Left lung (tissue), 14 donors: ENCODE measurements at regions of chr4 and their contacts with region 1.

Region 1: DNA sequence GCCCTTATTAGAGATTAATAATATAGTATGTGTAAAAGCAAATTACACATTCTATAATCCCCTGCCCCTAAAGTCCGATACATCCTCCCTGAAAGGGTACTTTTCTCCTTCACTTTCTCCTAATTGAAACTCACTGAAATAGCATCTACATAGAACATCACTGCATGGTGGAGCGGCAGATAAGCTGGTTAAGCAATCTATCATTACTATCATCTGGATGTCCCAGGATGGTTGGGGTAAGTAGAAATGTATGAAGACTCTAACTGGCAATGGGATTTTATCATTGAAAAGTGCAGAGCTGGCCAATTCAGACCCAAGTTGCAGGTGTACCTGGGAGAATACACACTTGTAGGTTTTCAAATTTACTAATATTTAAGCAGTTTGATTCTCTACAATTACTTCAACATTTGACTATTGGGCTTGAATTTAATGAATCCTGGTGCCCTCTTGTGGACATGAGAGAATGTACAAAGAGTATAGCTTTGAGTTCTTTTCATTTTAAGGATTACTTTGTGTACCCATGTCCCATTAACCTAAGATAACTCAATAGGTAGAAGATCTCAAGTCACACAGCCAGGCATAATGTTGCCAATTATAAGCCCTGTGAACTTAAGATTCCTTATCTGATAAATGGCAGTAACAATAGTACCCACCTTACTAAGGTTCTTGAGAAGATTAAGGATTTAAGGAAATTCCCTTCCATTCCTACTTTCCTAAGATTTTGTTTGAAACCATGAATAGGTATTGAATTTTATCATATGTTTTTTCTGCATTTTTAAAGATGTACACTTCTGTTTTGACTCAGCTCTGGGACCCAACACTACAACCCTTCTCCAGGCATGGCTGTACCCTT is 69.8 kb downstream of the SHROOM3 start:
- DNase-seq: peak in 1 of 4 donors; percentile 54
- ATAC-seq: peak; percentile 72
- H3K4me3 ChIP-seq: no peak overlapping the region
- H3K27ac ChIP-seq: no peak overlapping the region
- H3K4me1 ChIP-seq: no peaks in the 10 kb centered on the region
- H3K27me3 ChIP-seq: no peaks in the 10 kb centered on the region
- CTCF ChIP-seq: peak; percentile 44 to 65

Region 2: GRCh38 chr4:76188557-76188956 is 316.3 kb before region 1 on chr4:
- intact Hi-C with region 1: no loop called
- DNase-seq: no peak
- ATAC-seq: no peak
- H3K4me3 ChIP-seq: no peak overlapping the region
- H3K27ac ChIP-seq: no peak overlapping the region
- H3K4me1 ChIP-seq: peaks cover 4 to 33% of the 10 kb centered on the region in 2 donors
- H3K27me3 ChIP-seq: no peaks in the 10 kb centered on the region
- CTCF ChIP-seq: no peak

Region 3: GRCh38 chr4:76430519-76431388 is 74.1 kb before region 1 on chr4:
- intact Hi-C with region 1: loop called in 1 of 2 experiments (anchors 5 kb)
- DNase-seq: peak in 2 of 4 donors; percentile 36 to 61
- ATAC-seq: peak; percentile 45
- H3K4me3 ChIP-seq: no peak overlapping the region
- H3K27ac ChIP-seq: no peak overlapping the region
- H3K4me1 ChIP-seq: no peaks in the 10 kb centered on the region
- H3K27me3 ChIP-seq: peaks cover 0 to 16% of the 10 kb centered on the region in 2 donors
- CTCF ChIP-seq: peak; percentile 33 to 39

Region 4: DNA sequence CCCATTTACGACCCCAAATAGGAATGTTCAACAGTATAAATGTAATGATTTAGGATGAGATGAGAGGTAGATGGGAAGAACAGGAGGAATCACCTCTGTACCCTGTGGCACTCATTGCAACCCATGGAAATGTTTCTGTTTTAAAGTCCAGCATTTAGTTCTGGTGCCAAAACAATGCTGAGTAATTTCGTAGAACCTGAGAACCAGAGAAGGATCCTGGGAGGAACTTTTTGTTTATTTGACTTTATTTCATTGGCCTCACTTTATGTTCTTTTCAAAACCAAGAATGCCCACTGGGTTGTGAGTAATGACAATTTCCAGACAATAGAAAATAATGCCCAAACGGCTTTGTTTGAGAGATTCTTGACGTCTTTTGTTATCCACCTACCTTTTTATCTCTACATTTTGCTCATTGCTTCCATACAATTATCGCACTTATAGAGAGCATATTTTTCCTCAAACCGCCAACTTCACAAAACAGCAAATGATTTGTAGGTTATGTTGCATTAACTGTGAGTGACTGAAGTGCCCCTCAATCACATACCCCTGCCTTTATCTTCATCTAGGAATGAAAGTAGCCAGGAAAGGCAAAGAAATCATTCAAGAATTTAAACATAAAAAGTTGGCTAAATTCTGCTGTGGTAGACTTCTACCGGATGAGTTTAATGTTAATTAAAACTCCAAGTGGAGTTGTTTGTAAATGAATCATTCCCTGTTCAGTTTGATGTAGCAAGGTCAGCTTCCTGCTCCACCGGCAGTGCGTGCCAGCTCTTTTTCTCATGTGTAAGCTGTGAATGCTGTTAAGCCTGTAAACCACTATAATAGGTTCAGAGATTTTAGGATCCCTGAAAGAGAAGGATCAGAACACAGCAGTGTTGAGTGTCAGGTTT is 41.7 kb after region 1 on chr4:
- intact Hi-C with region 1: no loop called
- DNase-seq: peak in 2 of 4 donors; percentile 51 to 62
- ATAC-seq: peak; percentile 88
- H3K4me3 ChIP-seq: no peak overlapping the region
- H3K27ac ChIP-seq: peak overlapping the region in 1 of 2 donors; percentile 34
- H3K4me1 ChIP-seq: peaks cover 0 to 6% of the 10 kb centered on the region in 2 donors
- H3K27me3 ChIP-seq: no peaks in the 10 kb centered on the region
- CTCF ChIP-seq: no peak

Region 5: DNA sequence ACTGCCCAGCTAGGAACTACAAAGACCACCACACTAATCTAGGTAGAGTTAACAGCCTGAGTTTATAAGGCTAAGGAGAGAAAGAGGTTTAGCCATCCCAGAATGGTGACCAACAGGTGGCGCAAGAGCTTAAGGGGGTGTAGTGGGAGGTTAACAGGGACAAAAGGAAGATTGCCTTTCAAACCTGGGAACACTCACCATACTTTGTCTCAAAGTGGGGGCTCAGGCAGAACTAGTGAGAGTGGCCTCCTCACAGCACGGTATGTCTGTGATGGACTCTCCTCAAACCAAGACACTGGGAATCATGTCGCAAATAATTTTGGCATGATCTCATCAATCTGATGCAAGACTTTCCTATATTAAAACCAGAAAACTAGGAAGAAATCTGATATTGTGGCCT is 547.5 kb after region 1 on chr4:
- intact Hi-C with region 1: no loop called
- DNase-seq: peak in 1 of 4 donors; percentile 50
- ATAC-seq: peak; percentile 58
- H3K4me3 ChIP-seq: no peak overlapping the region
- H3K27ac ChIP-seq: no peak overlapping the region
- H3K4me1 ChIP-seq: peaks cover 0 to 5% of the 10 kb centered on the region in 2 donors
- H3K27me3 ChIP-seq: no peaks in the 10 kb centered on the region
- CTCF ChIP-seq: peak in 1 of 2 donors; percentile 8